Activated T-helper 1 cell treated with anti-CD3 and anti-CD28 coated beads, Interleukin-12 subunit alpha, Interleukin-12 subunit beta, Interleukin-2, Interleukin-4 antibody, amounts not matched to agents 30 ng/mL and 10 ng/mL and 1 ng/mL, durations not matched to agents 14 hours and 24 hours and 36 hours (primary cell): ENCODE measurements at regions of chr19 and their contacts with region 1.

Region 1: GRCh38 chr19:39671738-39672363 is 16.1 kb downstream of the LGALS16 start:
- DNase-seq: peak; percentile 50
- H3K4me3 Mint-ChIP-seq: no peak overlapping the region
- H3K27ac Mint-ChIP-seq: no peak overlapping the region
- H3K4me1 Mint-ChIP-seq: peaks cover 32% of the 10 kb centered on the region
- H3K27me3 Mint-ChIP-seq: peaks cover 5% of the 10 kb centered on the region

Region 2: GRCh38 chr19:39397360-39398296 is 274.2 kb before region 1 on chr19:
- intact Hi-C with region 1: loop called (anchors 5 kb)
- DNase-seq: peak; percentile 88
- H3K4me3 Mint-ChIP-seq: no peak overlapping the region
- H3K27ac Mint-ChIP-seq: peak overlapping the region; percentile 67
- H3K4me1 Mint-ChIP-seq: peaks cover 58% of the 10 kb centered on the region
- H3K27me3 Mint-ChIP-seq: no peaks in the 10 kb centered on the region

Region 3: DNA sequence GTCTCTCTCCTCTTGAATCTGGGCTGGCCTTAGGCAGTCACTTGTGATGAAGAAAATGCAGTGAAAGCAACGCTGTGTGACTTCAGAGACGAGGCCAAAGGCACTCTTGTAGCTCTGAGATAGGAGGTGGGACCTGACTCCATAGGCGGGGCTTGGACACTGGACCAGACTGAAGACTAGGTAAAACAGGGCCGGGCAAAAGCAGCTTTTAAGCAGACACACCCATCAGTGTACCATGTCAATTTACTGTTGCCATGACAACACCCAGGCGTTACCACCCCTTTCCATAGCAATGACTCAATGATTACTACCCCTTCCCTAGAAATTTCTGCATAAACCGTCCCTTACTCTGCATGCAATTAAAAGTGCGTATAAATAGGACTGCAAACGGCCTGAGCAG is 125.3 kb before region 1 on chr19:
- intact Hi-C with region 1: loop called (anchors 1 kb)
- DNase-seq: no peak
- H3K4me3 Mint-ChIP-seq: no peak overlapping the region
- H3K27ac Mint-ChIP-seq: no peak overlapping the region
- H3K4me1 Mint-ChIP-seq: peaks cover 13% of the 10 kb centered on the region
- H3K27me3 Mint-ChIP-seq: no peaks in the 10 kb centered on the region

Region 4: DNA sequence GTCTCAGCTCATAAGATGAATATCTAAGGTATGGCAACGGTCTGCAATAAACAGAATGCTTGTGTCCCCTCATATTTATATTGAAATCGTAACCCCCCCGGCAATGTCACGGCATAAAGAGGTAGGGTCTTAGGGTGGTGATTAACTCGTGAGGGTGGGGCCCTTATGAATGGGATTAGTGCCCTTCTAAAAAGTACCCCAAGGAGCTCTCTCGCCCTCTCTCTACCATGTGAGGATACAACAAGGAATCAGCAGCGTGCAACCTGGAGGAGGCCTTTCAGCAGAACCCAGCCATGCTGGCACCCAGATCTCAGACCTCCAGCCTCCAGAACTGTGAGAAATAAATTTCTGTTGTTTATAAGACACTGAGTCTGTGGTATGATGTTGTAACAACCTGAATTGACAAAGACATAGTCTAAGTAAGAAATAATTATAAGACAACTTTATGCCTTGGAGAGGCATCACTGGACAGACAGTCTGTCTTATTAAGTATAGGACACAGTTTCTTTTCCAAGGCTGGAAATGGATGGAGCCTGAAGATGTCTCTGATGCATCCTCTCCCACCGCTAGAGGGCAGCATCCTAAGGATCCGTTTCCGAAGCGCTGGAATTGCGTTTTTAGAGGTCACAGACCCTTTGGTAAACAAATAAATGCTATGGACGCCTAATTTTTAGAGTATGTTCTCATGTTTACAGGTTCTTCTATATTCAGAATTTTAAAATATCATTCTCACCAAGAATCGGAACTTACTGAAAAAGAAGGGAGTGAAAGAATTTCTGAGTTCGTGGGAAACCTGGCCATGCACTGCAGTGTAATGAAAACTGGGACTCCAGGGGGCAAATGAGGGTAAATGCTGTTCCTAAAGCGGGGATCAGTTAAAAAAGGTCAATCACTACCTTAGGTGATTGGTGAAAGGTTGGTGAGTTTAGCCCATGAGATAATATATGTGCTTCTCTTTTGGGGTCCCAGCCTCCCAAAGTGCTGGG is 93.5 kb after region 1 on chr19:
- intact Hi-C with region 1: loop called (anchors 1 kb)
- DNase-seq: no peak
- H3K4me3 Mint-ChIP-seq: no peak overlapping the region
- H3K27ac Mint-ChIP-seq: no peak overlapping the region
- H3K4me1 Mint-ChIP-seq: no peaks in the 10 kb centered on the region
- H3K27me3 Mint-ChIP-seq: peaks cover 11% of the 10 kb centered on the region